ENCODE measurements at regions of chr10 and their contacts with region 1.

Region 1: GRCh38 chr10:121722665-121723064 is 124.4 kb upstream of the FGFR2 start:
- DNase-seq: no peak
- H3K4me3 ChIP-seq: no peak overlapping the region
- H3K27ac ChIP-seq: no peak overlapping the region
- H3K4me1 ChIP-seq: peaks cover 0 to 4% (median 2%) of the 10 kb centered on the region in 4 experiments; a peak in 2 of 7 replicates
- H3K27me3 ChIP-seq: no peaks in the 10 kb centered on the region
- CTCF ChIP-seq: no peak
- EP300 ChIP-seq: no peak
- POLR2A ChIP-seq: no peak
- RAD21 ChIP-seq: no peak

Region 2: DNA sequence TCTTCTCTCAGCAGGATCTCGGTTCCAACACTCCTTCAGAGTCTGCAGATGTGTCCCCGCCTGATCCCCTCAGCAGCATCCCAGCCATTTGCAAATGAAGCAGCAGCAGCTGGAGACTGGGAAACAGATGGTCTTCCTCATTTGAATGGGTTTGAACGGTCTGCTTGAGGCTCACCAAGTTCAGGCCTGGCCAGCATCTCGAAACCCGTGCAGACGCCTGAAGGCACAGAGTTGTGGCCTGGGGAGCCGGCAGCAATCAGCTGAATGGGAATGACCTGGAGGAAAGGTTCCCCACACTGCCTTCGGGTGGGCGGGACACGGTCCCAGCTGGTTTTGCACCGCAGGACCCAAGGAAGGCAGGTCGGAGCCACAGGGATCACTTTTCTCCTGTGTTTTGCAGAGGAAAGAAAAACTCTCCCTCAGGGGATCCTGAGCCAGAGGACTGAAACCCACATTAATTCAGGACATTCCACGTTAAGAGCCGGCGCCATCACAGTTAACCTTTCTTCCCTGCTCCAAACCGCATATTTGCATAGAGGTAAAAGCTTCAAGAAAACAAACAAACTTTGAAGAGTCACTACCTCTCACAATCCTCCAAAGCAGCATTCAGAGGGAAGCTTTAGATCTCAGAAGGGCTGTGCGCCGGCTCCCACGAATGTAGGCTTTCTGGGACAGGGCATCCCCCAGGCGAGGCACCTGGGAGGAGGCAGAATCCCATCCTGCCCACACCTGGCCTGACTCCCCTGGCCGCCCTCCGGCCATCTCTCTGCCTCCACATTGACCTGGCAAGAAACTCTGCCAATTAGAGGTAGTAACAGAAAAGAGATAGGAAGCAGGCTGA is 142.2 kb before region 1 on chr10:
- CTCF ChIA-PET with region 1: no interaction called
- POLR2A ChIA-PET with region 1: no interaction called
- DNase-seq: peak; percentile 72 to 79
- H3K4me3 ChIP-seq: peak overlapping the region in 3 of 4 experiments; percentile 14 to 46 (median 23); a peak in 7 of 8 replicates
- H3K27ac ChIP-seq: peak overlapping the region; percentile 69
- H3K4me1 ChIP-seq: peaks cover 36 to 55% (median 43%) of the 10 kb centered on the region in 4 experiments
- H3K27me3 ChIP-seq: no peaks in the 10 kb centered on the region
- CTCF ChIP-seq: no peak
- EP300 ChIP-seq: peak in 1 of 2 experiments; percentile 87; a peak in 1 of 3 replicates
- POLR2A ChIP-seq: peak in 1 of 2 experiments; percentile 54; a peak in 2 of 3 replicates
- RAD21 ChIP-seq: peak in 1 of 2 experiments; percentile 0; a peak in 2 of 4 replicates

Region 3: GRCh38 chr10:121734589-121735045 is 12.0 kb after region 1 on chr10:
- CTCF ChIA-PET with region 1: interaction called, 18 read pairs
- POLR2A ChIA-PET with region 1: interaction called, 3 read pairs
- DNase-seq: peak in 1 of 2 experiments; percentile 64
- H3K4me3 ChIP-seq: peak overlapping the region in 1 of 4 experiments; percentile 5; a peak in 1 of 8 replicates
- H3K27ac ChIP-seq: no peak overlapping the region
- H3K4me1 ChIP-seq: peaks cover 7 to 23% (median 12%) of the 10 kb centered on the region in 4 experiments
- H3K27me3 ChIP-seq: no peaks in the 10 kb centered on the region
- CTCF ChIP-seq: peak; percentile 35 to 61 (median 53); a peak in 3 of 4 replicates
- EP300 ChIP-seq: no peak
- POLR2A ChIP-seq: no peak
- RAD21 ChIP-seq: peak; percentile 68 to 71